ENCODE measurements at regions of chr1 and their contacts with region 1.

Region 1: DNA sequence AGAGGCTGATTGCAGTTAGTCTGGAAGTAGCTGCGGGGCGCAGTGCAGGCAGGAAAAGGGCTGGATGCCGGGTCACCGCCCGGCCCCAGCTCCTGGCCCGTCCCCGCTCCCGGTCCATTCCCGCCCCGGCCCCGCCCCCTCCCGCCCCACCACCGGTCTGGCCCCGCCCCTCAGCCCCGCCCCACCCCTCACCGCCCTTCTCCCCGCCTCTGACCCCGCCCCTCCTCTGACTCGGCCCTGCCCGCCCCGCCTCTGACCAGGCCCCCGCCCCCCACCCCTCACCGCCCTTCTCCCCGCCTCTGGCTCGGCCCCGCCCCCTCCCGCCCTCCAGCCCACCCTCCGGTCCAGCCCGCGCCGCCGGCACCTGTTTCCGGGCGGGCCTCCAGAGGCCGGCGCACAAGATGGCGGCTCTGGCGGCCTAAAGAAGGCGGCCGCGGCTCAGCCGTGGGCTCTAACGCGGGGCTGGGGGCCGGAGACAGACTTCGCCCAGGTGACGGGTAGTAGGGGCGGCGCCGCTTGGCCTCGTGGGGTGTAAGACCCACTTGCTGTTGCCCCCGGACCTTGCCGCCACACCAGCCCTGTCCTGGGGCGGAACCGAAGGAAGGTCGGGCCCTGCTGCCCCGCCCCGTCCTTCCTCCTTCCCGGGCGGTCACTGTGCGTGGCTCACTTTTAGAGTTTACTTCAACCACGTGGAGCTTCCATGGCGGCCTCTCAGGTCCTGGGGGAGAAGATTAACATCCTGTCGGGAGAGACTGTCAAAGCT is at the start of gene UBIAD1:
- DNase-seq: peak; percentile 66 to 84 (median 72)
- ATAC-seq: peak; percentile 93
- H3K4me3 ChIP-seq: peak within 1 kb of the TSS; percentile 71
- H3K4me3 Mint-ChIP-seq: peak within 1 kb of the TSS; percentile 84 to 99 (median 96)
- H3K27ac ChIP-seq: peak within 1 kb of the TSS; percentile 97
- H3K27ac Mint-ChIP-seq: peak within 1 kb of the TSS; percentile 90 to 96 (median 92)
- H3K4me1 ChIP-seq: peaks cover 21 to 30% of the 10 kb centered on the region in 2 donors
- H3K4me1 Mint-ChIP-seq: peaks cover 23 to 41% (median 32%) of the 10 kb centered on the region in 7 donors
- H3K27me3 ChIP-seq: no peaks in the 10 kb centered on the region
- H3K27me3 Mint-ChIP-seq: peaks cover 0 to 6% (median 0%) of the 10 kb centered on the region in 5 donors
- total RNA-seq, gene UBIAD1: 21.7 to 41.7 (median 32.9) TPM

Region 2: GRCh38 chr1:11059990-11060830 is 212.8 kb before region 1 on chr1 and contains the start of gene SRM:
- CTCF ChIA-PET with region 1: no interaction called
- POLR2A ChIA-PET with region 1: no interaction called
- intact Hi-C with region 1: loop called in 1 of 2 experiments (anchors 1 kb)
- DNase-seq: peak; percentile 84 to 95 (median 91)
- ATAC-seq: peak; percentile 97
- H3K4me3 ChIP-seq: peak within 1 kb of the TSS; percentile 92
- H3K4me3 Mint-ChIP-seq: peak within 1 kb of the TSS; percentile 91 to 98 (median 93)
- H3K27ac ChIP-seq: peak within 1 kb of the TSS; percentile 85
- H3K27ac Mint-ChIP-seq: peak within 1 kb of the TSS; percentile 81 to 95 (median 91)
- H3K4me1 ChIP-seq: peaks cover 5 to 19% of the 10 kb centered on the region in 2 donors
- H3K4me1 Mint-ChIP-seq: peaks cover 6 to 37% (median 24%) of the 10 kb centered on the region in 7 donors
- H3K27me3 ChIP-seq: no peaks in the 10 kb centered on the region
- H3K27me3 Mint-ChIP-seq: no peaks in the 10 kb centered on the region
- total RNA-seq, gene SRM: 30.9 to 116 (median 44.1) TPM

Region 3: GRCh38 chr1:11099310-11100149 is 173.5 kb before region 1 on chr1 and contains the start of gene EXOSC10:
- CTCF ChIA-PET with region 1: no interaction called
- POLR2A ChIA-PET with region 1: no interaction called
- intact Hi-C with region 1: loop called in 1 of 2 experiments (anchors 1 kb)
- DNase-seq: peak; percentile 90 to 97 (median 95)
- ATAC-seq: peak; percentile 99
- H3K4me3 ChIP-seq: peak within 1 kb of the TSS; percentile 74
- H3K4me3 Mint-ChIP-seq: peak within 1 kb of the TSS; percentile 87 to 99 (median 96)
- H3K27ac ChIP-seq: peak within 1 kb of the TSS; percentile 88
- H3K27ac Mint-ChIP-seq: peak within 1 kb of the TSS; percentile 91 to 97 (median 95)
- H3K4me1 ChIP-seq: peaks cover 3 to 4% of the 10 kb centered on the region in 2 donors
- H3K4me1 Mint-ChIP-seq: peaks cover 6 to 27% (median 20%) of the 10 kb centered on the region in 7 donors
- H3K27me3 ChIP-seq: no peaks in the 10 kb centered on the region
- H3K27me3 Mint-ChIP-seq: no peaks in the 10 kb centered on the region
- total RNA-seq, gene EXOSC10: 72.0 to 83.4 (median 80.9) TPM

Region 4: DNA sequence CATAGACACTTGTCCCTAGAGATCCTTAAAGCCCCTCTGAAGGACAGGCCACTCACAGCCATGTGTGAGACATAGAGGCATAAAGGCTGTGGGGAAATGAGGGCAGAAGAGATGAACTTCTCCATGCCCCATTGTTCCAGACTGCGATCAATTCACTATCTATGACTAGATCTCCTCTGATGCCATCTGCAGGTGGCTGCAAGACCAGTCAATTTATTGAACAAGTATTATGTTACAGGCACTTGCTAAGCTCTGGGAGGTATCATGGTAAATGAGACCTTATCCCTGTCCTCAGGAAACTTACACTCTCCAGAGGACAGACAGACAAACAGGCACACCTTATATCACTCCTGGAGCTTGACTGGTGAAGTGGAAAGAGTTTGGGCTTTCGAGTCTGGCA is 22.9 kb after region 1 on chr1:
- CTCF ChIA-PET with region 1: interaction called, 3 read pairs
- POLR2A ChIA-PET with region 1: interaction called, 9 read pairs
- intact Hi-C with region 1: loop called in 1 of 2 experiments (anchors 2 kb)
- DNase-seq: peak in 5 of 9 donors; percentile 31 to 55 (median 44)
- ATAC-seq: no peak
- H3K4me3 ChIP-seq: no peak overlapping the region
- H3K4me3 Mint-ChIP-seq: peak overlapping the region in 2 of 10 donors; percentile 18 to 59
- H3K27ac ChIP-seq: peak overlapping the region; percentile 41
- H3K27ac Mint-ChIP-seq: peak overlapping the region in 8 of 9 donors; percentile 55 to 93 (median 85)
- H3K4me1 ChIP-seq: peaks cover 0 to 34% of the 10 kb centered on the region in 2 donors
- H3K4me1 Mint-ChIP-seq: peaks cover 37 to 72% (median 59%) of the 10 kb centered on the region in 7 donors
- H3K27me3 ChIP-seq: no peaks in the 10 kb centered on the region
- H3K27me3 Mint-ChIP-seq: no peaks in the 10 kb centered on the region

Region 5: DNA sequence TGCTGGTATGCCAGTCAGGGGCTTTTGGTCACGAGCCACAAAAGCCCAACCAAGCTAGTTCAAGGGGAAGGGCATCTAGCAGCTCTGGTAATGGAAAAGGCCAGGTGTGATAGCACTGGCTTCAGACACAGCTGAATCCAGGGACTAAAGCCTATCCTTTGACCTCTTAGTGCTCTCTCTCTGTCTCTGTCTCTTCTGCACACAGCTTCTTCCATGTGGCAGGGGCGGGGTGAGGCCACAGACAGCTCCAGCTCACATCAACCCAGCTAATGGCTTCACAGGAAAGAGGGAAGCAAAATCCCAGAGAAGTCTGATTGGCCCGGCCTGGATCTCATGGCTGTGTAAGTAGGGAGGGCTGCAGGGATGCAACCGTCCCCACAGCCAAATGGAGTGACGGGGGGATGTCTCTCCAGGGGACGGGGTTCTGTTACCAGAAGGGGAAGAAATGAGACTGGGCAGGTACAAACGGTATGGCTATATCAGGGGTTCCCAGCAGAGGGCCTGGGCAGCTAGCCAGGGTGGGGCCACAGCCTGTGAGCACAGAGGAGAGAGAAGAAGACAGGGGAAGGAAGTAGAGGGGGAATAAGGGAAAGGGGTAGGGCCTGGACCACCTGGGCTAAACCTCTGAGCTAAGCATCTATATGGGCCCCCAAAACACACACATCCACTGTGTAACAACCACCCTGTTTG is 338.8 kb after region 1 on chr1:
- CTCF ChIA-PET with region 1: no interaction called
- POLR2A ChIA-PET with region 1: no interaction called
- intact Hi-C with region 1: no loop called
- DNase-seq: no peak
- ATAC-seq: no peak
- H3K4me3 ChIP-seq: no peak overlapping the region
- H3K4me3 Mint-ChIP-seq: no peak overlapping the region
- H3K27ac ChIP-seq: no peak overlapping the region
- H3K27ac Mint-ChIP-seq: no peak overlapping the region
- H3K4me1 ChIP-seq: no peaks in the 10 kb centered on the region
- H3K4me1 Mint-ChIP-seq: peaks cover 0 to 1% (median 0%) of the 10 kb centered on the region in 7 donors
- H3K27me3 ChIP-seq: no peaks in the 10 kb centered on the region
- H3K27me3 Mint-ChIP-seq: peaks cover 0 to 11% (median 4%) of the 10 kb centered on the region in 5 donors

Region 6: GRCh38 chr1:11654137-11654938 is 381.3 kb after region 1 on chr1 and contains the starts of genes FBXO2 and FBXO44:
- CTCF ChIA-PET with region 1: no interaction called
- POLR2A ChIA-PET with region 1: no interaction called
- intact Hi-C with region 1: loop called in 1 of 2 experiments (anchors 1 kb)
- DNase-seq: peak; percentile 40 to 75 (median 63)
- ATAC-seq: peak; percentile 86
- H3K4me3 ChIP-seq: peak within 1 kb of the TSS; percentile 53
- H3K4me3 Mint-ChIP-seq: peak within 1 kb of the TSS; percentile 72 to 87 (median 78)
- H3K27ac ChIP-seq: peak within 1 kb of the TSS; percentile 71
- H3K27ac Mint-ChIP-seq: peak within 1 kb of the TSS in 5 of 9 donors; percentile 38 to 88 (median 67)
- H3K4me1 ChIP-seq: peaks cover 16 to 31% of the 10 kb centered on the region in 2 donors
- H3K4me1 Mint-ChIP-seq: peaks cover 19 to 48% (median 33%) of the 10 kb centered on the region in 7 donors
- H3K27me3 ChIP-seq: no peaks in the 10 kb centered on the region
- H3K27me3 Mint-ChIP-seq: peaks cover 0 to 17% (median 0%) of the 10 kb centered on the region in 5 donors
- total RNA-seq, gene FBXO2: 0.97 to 4.1 (median 3.7) TPM
- total RNA-seq, gene FBXO44: 35.2 to 67.1 (median 44.8) TPM